Activated CD8-positive, alpha-beta memory T cell treated with anti-CD3 and anti-CD28 coated beads, Interleukin-2, amount 10 ng/mL, durations not matched to agents 7 days and 5 days (primary cell): ENCODE measurements at regions of chr6 and their contacts with region 1.

Region 1: GRCh38 chr6:30828027-30828960 is 56.0 kb upstream of the DDR1 start:
- DNase-seq: peak; percentile 86
- ATAC-seq: peak; percentile 83
- H3K4me3 Mint-ChIP-seq: peak overlapping the region; percentile 82
- H3K27ac Mint-ChIP-seq: peak overlapping the region; percentile 98
- H3K4me1 Mint-ChIP-seq: peaks cover 56% of the 10 kb centered on the region
- H3K27me3 Mint-ChIP-seq: no peaks in the 10 kb centered on the region

Region 2: DNA sequence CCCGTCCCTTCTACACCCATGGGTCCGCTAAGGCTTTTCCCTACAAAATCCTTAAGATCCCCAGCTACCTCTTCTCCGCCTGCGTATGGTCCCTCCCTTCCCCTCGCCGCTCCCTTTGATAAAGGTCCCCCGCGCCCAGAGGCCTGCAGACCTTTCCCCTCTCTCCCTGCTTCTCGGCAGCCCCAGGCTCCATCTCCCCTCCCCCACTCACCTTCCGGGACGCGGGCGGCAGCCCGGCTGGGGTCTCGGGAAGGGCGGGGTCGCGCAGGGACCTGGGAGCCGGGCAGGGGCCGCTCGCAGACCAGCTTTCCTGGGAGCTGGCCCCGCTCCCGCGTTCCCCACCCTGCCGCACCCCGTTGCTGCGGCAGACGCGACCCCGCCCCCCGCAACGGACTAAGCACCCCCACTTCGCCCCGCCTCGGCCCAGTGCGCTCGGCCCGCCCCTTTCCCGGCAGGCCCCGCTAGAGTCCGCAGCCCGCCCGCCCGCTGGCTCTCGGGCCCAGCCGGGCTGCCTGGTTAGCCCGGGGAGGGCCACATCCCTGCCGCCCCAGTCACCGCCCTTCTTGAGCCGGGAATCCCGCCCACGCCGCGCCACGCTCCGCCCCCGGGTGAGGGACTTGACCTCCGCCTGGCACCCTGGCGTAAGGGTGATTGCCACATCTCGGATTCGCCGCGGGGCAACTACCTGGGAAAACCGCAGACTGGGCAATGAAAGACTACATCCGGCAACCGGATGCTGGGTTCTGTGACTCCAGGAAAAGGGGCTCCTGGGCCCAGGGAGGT is 85.8 kb before region 1 on chr6 and contains the start of gene FLOT1:
- CTCF ChIA-PET with region 1: interaction called, 10 read pairs
- DNase-seq: peak; percentile 96
- ATAC-seq: peak; percentile 84
- H3K4me3 Mint-ChIP-seq: peak within 1 kb of the TSS; percentile 95
- H3K27ac Mint-ChIP-seq: peak within 1 kb of the TSS; percentile 83
- H3K4me1 Mint-ChIP-seq: peaks cover 59% of the 10 kb centered on the region
- H3K27me3 Mint-ChIP-seq: no peaks in the 10 kb centered on the region
- total RNA-seq, gene FLOT1: 165 to 184 TPM

Region 3: DNA sequence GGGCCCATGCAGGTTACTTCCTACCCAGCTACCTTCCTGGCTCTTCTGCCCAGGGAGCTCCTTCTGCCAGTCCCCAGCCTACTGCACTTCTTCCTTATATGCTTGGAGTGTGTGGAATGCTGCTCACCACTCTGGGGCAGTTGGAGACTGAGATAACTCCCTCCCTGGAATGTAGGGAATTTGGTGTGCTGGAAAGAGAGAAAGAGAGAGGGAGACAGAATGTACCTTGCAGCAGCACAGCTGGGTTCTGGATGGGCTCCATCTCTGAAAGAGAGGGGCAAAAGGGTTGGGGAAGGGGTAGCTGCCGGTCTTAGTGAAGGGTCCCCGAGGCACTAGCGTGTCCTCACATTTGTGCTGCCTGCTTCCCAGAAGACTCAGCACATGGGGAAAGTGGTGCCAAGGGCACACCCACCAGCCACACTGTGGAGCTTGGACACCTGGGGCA is 15.8 kb after region 1 on chr6:
- CTCF ChIA-PET with region 1: interaction called, 43 read pairs
- DNase-seq: no peak
- ATAC-seq: no peak
- H3K4me3 Mint-ChIP-seq: no peak overlapping the region
- H3K27ac Mint-ChIP-seq: no peak overlapping the region
- H3K4me1 Mint-ChIP-seq: peaks cover 22% of the 10 kb centered on the region
- H3K27me3 Mint-ChIP-seq: peaks cover 4% of the 10 kb centered on the region

Region 4: DNA sequence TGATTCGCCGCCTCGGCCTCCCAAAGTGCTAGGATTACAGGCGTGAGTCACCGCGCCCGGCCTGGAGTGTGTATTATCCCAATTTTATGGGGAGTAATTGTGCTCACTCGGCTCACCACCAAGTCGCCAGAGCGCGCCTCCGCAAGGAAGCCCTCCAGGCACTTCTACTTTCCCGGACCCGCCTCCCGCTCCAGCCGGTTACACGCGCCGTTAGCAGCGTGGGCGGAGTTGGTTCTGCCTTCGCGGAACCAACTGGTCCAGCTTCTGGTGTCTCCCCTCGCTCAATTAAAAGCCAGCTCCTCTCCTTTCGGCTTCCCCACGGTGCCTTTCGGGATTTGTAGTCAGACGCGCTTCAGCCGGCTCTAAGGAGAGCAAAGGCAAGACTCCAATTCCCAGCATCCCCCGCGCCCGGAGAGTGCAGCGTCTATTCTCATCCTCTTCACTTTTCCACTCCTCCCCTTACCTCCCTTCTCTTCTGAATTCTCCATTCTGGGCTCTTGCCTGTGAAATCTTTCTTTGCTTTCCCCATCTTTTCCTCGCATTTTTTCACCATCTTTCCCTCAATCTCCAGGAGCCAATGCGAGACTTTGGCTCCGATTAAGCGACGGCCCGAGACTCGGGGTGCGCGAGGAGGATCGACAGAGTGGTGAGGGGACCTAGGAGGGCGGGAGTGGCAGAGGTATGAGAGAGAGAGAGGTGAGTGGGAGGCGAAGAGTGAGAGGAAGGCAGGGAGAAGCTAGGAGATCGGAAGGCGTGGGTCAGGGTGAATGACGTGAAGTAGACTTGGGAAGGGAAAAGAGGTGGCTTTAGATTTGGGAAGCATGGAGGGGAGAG is 79.7 kb after region 1 on chr6 and contains the start of gene GTF2H4:
- CTCF ChIA-PET with region 1: interaction called, 42 read pairs
- DNase-seq: peak; percentile 98
- ATAC-seq: peak; percentile 98
- H3K4me3 Mint-ChIP-seq: peak within 1 kb of the TSS; percentile 97
- H3K27ac Mint-ChIP-seq: peak within 1 kb of the TSS; percentile 78
- H3K4me1 Mint-ChIP-seq: peaks cover 19% of the 10 kb centered on the region
- H3K27me3 Mint-ChIP-seq: no peaks in the 10 kb centered on the region
- total RNA-seq, gene GTF2H4: 30.0 to 34.9 TPM

Region 5: GRCh38 chr6:31079656-31080261 is 251.5 kb after region 1 on chr6:
- CTCF ChIA-PET with region 1: interaction called, 15 read pairs
- DNase-seq: peak; percentile 80
- ATAC-seq: peak; percentile 82
- H3K4me3 Mint-ChIP-seq: peak overlapping the region; percentile 28
- H3K27ac Mint-ChIP-seq: peak overlapping the region; percentile 43
- H3K4me1 Mint-ChIP-seq: peaks cover 3% of the 10 kb centered on the region
- H3K27me3 Mint-ChIP-seq: peaks cover 15% of the 10 kb centered on the region